Thyroid gland (tissue), 4 donors: ENCODE measurements at regions of chr3 and their contacts with region 1.

Region 1: GRCh38 chr3:184185461-184186308 is at the start of gene ABCF3:
- DNase-seq: peak; percentile 100
- H3K4me3 ChIP-seq: peak within 1 kb of the TSS; percentile 46 to 91 (median 56)
- H3K27ac ChIP-seq: peak within 1 kb of the TSS; percentile 54 to 74 (median 65)
- H3K4me1 ChIP-seq: peaks cover 17 to 19% of the 10 kb centered on the region in 2 donors
- H3K27me3 ChIP-seq: no peaks in the 10 kb centered on the region
- CTCF ChIP-seq: no peak
- POLR2A ChIP-seq: peak in 1 of 2 donors; percentile 76
- total RNA-seq, gene ABCF3: 51.1 to 83.4 (median 72.6) TPM

Region 2: GRCh38 chr3:183991403-183991802 is 194.3 kb before region 1 on chr3:
- intact Hi-C with region 1: no loop called
- DNase-seq: no peak
- H3K4me3 ChIP-seq: no peak overlapping the region
- H3K27ac ChIP-seq: no peak overlapping the region
- H3K4me1 ChIP-seq: no peaks in the 10 kb centered on the region
- H3K27me3 ChIP-seq: no peaks in the 10 kb centered on the region
- CTCF ChIP-seq: no peak
- POLR2A ChIP-seq: no peak

Region 3: DNA sequence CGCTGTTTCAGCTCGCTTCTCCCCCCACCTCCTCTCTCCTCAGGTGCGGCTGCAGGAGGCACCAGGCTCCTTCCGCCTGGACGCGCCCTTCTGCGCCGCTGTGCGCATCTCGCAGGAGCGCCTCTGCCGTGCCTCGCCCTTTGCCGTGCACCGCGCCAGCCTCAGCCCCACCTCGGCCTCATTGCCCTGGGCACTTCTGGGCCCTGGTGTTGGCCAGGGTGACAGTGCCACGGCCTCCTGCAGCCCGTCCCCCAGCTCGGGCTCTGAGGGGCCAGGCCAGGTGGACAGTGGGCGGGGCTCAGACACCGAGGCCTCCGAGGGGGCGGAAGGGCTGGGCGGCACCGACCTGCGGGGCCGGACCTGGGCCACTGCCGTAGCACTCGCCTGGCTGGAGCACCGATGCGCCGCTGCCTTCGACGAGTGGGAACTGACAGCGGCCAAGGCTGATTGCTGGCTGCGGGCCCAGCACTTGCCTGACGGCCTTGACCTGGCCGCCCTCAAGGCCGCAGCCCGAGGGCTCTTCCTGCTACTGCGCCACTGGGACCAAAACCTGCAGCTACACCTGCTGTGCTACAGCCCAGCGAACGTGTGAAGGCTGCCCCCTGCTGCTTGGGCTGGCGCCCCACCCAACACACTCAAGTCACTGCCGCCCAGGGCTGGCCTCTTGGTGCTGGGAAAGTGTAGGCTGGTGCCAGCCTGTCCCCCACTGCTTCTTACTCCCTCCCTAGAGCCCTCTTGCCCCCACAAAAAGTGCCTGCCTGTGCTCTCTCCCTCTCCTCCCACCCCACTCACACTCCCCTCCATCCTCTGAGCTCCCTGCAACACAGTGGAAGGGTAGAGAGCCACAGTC is 56.0 kb after region 1 on chr3:
- intact Hi-C with region 1: loop called (anchors 5 kb)
- DNase-seq: peak; percentile 87 to 91
- H3K4me3 ChIP-seq: peak overlapping the region in 1 of 3 donors; percentile 17
- H3K27ac ChIP-seq: no peak overlapping the region
- H3K4me1 ChIP-seq: peaks cover 9 to 12% of the 10 kb centered on the region in 2 donors
- H3K27me3 ChIP-seq: no peaks in the 10 kb centered on the region
- CTCF ChIP-seq: peak in 5 of 6 experiments; percentile 53 to 72 (median 64)
- POLR2A ChIP-seq: peak in 1 of 2 donors; percentile 26

Region 4: GRCh38 chr3:184289426-184289938 is 103.8 kb after region 1 on chr3:
- intact Hi-C with region 1: no loop called
- DNase-seq: peak; percentile 44 to 49
- H3K4me3 ChIP-seq: no peak overlapping the region
- H3K27ac ChIP-seq: no peak overlapping the region
- H3K4me1 ChIP-seq: no peaks in the 10 kb centered on the region
- H3K27me3 ChIP-seq: no peaks in the 10 kb centered on the region
- CTCF ChIP-seq: peak in 4 of 6 experiments; percentile 41 to 67 (median 54)
- POLR2A ChIP-seq: no peak